ENCODE measurements at regions of chr15 and their contacts with region 1.

Region 1: GRCh38 chr15:56869573-56869972 is 48.9 kb upstream of the TCF12 start:
- DNase-seq: peak; percentile 19 to 88 (median 69)

Region 2: DNA sequence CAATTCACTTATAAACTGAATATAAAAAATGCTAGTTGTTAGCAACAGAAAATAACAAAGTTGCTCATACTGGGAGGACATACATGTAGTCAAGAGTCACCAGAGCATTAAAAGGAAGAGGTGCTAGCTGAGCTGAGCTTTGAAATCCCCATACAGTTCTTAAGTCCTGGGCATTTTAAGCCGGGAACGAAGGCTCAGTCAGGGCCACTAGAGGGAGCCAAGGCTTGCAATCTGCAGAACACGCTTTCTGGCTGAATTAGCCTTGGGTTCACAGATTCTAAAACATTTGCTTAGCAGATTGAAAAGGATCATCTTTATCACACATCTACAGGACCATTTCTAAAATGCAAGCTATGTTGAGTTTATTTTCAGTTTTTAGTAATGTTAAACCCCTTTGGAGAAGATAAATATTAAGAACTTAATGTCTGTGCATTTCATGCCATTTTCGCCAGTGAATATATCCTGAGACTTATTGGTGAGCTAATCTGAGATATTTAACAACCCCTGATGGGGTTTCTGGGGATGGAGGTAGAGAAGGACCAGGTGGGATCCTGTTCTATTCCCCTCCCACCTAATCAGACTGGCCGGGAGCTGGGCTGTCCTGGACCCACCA is 378.4 kb before region 1 on chr15:
- intact Hi-C with region 1: loop called (anchors 10 kb)
- DNase-seq: peak; percentile 59 to 91 (median 80)

Region 3: GRCh38 chr15:56759450-56759845 is 110.1 kb before region 1 on chr15:
- intact Hi-C with region 1: no loop called
- DNase-seq: peak in 12 of 42 donors; percentile 5 to 32 (median 18)

Region 4: DNA sequence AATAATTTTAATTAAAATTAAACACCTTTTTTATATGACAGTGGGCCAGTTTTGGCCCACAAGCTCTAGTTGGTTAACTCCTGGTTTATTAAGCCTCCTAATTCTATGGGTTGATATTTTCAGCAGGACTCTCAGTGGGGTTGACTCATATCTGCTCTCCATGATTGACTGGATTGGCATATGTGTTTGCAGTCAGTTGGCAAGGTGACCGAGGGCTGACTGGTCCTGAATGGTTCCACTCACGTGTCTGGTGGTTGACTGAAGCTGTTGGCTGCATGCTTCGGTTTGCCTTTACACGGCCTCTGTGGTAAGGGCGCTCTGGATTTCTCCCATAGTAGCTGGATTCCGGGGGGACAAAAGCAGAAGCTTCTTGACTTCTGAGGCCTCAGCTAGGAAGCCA is 70.9 kb before region 1 on chr15:
- intact Hi-C with region 1: no loop called
- DNase-seq: no peak

Region 5: GRCh38 chr15:56821721-56822425 is 47.7 kb before region 1 on chr15:
- intact Hi-C with region 1: loop called (anchors 10 kb)
- DNase-seq: peak in 40 of 42 donors; percentile 17 to 82 (median 59)

Region 6: DNA sequence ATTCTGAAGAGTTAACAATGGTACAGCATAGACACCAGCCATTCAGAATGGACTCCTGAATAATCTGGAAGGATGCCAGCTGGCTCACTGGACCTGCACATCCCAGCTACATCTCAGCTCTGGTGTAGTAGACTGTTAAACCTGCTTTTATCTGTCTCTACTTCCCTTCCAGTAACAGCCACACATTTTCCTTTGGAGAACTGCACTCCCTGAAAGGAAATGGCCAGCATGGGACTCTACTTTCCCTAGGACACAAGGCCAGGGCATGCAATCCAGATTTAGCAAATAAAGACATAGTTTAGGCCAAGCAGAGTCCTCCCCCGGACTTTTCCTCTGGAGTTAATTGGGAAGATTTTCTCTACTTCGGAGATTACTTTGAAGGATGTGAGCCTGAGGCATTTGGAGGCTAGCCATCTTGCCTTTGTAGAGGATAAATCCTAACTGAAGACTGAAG is 33.8 kb before region 1 on chr15:
- intact Hi-C with region 1: no loop called
- DNase-seq: peak in 20 of 42 donors; percentile 4 to 78 (median 46)

Region 7: GRCh38 chr15:57045741-57046382 is 176.3 kb after region 1 on chr15:
- intact Hi-C with region 1: no loop called
- DNase-seq: no peak

Measured in head of caudate nucleus (tissue), 42 donors.